ENCODE measurements at regions of chr17 and their contacts with region 1.

Region 1: DNA sequence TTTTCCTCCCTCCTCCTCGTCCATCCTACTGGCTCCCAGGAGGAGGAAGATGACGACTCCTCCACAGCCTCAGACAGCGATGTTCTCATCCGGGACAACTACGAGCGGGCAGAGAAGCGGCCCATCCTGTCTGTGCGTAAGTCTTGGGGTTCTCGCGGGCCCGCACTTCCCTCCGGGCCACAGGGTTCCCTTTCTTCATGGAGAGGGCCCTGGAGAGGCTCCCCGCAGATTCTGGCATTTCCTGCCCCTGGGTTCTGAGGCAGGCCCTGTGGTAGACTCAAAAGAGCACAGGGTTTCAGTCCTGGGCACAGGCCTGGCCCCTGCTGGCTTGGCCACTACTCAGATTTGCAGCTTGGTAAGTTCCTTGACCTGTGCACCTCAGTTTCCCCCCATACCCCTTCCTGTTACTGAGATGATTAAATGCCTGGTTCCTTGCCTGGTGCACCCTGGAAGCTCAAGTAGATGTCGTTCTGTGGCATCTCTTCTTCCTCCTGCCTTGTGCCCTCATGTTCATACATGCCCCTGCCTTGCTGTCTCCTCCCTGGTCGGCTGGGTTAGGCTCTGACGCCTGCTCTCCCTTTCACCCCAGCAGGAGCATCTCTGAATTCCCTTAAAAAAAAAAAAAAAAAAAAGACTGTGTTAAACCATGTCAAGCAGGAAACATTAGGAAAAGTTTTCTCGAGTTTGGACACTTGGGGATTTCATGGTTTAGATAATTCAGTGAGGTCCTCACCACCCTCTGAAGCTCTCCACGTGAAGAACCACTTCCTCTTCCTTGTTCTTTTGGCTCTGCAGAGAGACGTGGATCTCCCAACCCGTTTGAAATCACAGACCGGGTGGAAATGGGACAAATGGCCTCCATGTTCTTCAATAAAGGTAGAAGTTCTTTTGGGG is 14.3 kb upstream of the NAT9 start:
- DNase-seq: no peak
- ATAC-seq: no peak
- H3K4me3 ChIP-seq: no peak overlapping the region
- H3K27ac ChIP-seq: no peak overlapping the region
- H3K4me1 ChIP-seq: no peaks in the 10 kb centered on the region
- CTCF ChIP-seq: no peak
- EP300 ChIP-seq: no peak
- POLR2A ChIP-seq: no peak
- RAD21 ChIP-seq: no peak

Region 2: DNA sequence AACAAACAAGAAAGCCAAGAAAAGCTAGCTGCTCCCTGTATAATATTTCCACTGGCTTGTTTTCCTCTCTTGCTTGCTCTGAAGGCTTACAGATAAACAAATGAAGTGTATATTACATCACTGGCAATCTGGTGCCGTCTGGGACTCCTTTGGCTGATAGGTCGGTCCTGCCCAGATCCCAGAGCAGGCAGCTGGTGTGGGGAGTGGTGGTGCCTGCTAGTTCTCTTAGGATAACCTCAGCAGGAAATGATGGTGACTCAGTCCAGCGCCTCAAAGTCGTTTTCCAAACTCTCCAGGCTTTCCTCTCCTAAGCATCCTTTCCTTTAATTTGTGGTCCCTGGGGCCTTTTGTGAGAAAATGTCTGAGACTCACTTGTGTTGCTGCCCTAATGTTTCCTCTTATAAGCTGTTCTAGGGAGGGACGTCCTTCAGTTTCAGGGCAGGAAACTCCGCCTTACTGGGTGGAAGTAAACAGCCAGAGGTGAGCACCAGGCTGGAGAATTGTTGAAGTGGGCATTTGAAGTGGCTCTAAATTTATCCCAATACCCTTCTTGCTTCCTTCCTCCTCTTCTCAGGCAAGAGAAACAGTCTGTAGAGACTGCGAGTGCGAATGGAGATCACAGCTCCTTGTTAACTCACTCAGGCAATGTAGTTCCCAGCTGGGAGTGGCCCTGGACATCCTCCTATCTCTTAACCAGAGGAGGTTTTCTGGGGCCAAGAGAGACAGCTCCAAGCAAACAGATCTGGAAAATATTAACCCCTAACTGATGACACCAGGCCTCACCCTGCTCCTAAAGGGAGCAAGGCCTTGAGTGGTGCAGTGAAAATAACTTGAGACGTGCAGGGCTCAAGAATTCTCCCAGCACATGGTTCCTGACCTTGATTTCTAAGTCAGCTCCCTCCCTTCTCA is 112.6 kb before region 1 on chr17:
- CTCF ChIA-PET with region 1: interaction called, 11 read pairs
- POLR2A ChIA-PET with region 1: no interaction called
- DNase-seq: peak; percentile 33 to 69
- ATAC-seq: peak; percentile 75 to 83
- H3K4me3 ChIP-seq: peak overlapping the region; percentile 5; the same call in 1 of the 3 replicates
- H3K27ac ChIP-seq: peak overlapping the region; percentile 33 to 37; a peak in 3 of 6 replicates
- H3K4me1 ChIP-seq: peaks cover 16% of the 10 kb centered on the region
- CTCF ChIP-seq: no peak
- EP300 ChIP-seq: no peak
- POLR2A ChIP-seq: no peak
- RAD21 ChIP-seq: no peak

Region 3: DNA sequence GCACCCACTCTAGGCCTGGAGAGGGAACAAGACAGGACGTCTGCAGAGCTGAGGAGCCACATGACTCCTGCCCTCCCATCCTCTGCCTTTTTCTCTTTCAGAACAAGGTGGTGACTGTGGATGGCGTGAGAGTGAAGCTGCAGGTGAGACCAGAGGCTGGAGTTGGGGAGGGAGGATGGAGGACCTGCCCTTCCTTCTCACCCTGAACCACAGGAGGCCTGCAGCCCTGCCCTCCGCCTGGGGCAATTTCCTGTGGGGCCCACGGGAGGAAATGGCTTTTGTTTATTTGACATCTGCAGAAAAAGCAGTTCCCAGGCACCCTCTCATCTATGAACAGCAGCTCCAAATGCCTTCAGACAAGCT is 48.3 kb before region 1 on chr17:
- CTCF ChIA-PET with region 1: interaction called, 705 read pairs
- POLR2A ChIA-PET with region 1: no interaction called
- DNase-seq: no peak
- ATAC-seq: no peak
- H3K4me3 ChIP-seq: no peak overlapping the region
- H3K27ac ChIP-seq: peak overlapping the region in 1 of 2 experiments; percentile 12; a peak in 1 of 6 replicates
- H3K4me1 ChIP-seq: peaks cover 29% of the 10 kb centered on the region
- CTCF ChIP-seq: no peak
- EP300 ChIP-seq: no peak
- POLR2A ChIP-seq: no peak
- RAD21 ChIP-seq: no peak

Region 4: GRCh38 chr17:74759243-74759801 is 31.1 kb before region 1 on chr17:
- CTCF ChIA-PET with region 1: interaction called, 705 read pairs
- POLR2A ChIA-PET with region 1: no interaction called
- DNase-seq: no peak
- ATAC-seq: peak; percentile 6 to 38; a peak in 3 of 6 replicates
- H3K4me3 ChIP-seq: no peak overlapping the region
- H3K27ac ChIP-seq: peak overlapping the region; percentile 57 to 79
- H3K4me1 ChIP-seq: peaks cover 69% of the 10 kb centered on the region
- CTCF ChIP-seq: no peak
- EP300 ChIP-seq: no peak
- POLR2A ChIP-seq: no peak
- RAD21 ChIP-seq: no peak

Region 5: GRCh38 chr17:74833501-74834377 is 43.3 kb after region 1 on chr17:
- CTCF ChIA-PET with region 1: interaction called, 1,302 read pairs
- POLR2A ChIA-PET with region 1: no interaction called
- DNase-seq: no peak
- ATAC-seq: peak; percentile 45 to 62; a peak in 4 of 6 replicates
- H3K4me3 ChIP-seq: no peak overlapping the region
- H3K27ac ChIP-seq: no peak overlapping the region
- H3K4me1 ChIP-seq: no peaks in the 10 kb centered on the region; the same call in 2 of the 3 replicates
- CTCF ChIP-seq: no peak
- EP300 ChIP-seq: no peak
- POLR2A ChIP-seq: no peak
- RAD21 ChIP-seq: no peak